ENCODE measurements at regions of chr6 and their contacts with region 1.

Region 1: DNA sequence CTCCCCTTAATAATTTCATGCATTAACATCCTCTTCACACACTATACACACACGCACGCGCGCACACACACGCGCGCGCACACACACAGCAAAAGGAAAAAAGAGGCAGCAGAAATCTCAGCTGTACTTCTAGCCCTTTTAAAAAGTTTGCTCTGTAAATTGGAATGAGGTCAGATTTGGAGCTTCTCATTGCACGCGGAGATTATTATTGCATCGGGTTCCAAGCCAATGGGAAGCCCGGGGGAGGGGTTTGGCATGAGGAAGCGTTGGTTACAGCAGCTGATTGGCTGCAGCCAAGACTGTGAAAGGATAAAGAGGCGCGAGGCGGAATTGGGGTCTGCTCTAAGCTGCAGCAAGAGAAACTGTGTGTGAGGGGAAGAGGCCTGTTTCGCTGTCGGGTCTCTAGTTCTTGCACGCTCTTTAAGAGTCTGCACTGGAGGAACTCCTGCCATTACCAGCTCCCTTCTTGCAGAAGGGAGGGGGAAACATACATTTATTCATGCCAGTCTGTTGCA is at the start of gene SOX4:
- DNase-seq: peak; percentile 99
- H3K4me3 Mint-ChIP-seq: no peak within 1 kb of the TSS
- H3K27ac Mint-ChIP-seq: no peak within 1 kb of the TSS
- H3K4me1 Mint-ChIP-seq: peaks cover 2% of the 10 kb centered on the region
- H3K27me3 Mint-ChIP-seq: no peaks in the 10 kb centered on the region
- CTCF ChIP-seq: no peak
- total RNA-seq, gene SOX4: 109 and 120 TPM in 2 replicates

Region 2: DNA sequence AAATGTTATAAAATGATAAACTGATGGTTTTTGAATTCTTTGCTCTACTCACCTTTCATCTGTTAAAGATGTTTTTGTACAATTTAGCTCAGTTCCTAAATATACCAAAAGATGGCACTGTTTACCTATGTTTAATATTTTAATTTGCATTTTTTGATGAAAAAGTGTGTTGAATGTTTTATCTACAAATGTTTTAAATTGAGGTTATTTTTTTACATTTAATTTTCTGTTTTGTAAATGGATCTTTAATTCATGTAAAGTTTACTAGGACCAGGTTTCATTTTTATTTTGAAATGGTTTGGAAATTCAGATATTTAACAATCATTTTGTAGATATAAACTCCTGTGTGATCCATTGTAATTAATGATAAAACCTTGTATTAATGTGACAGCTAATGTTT is 1029.2 kb before region 1 on chr6:
- CTCF ChIA-PET with region 1: interaction called, 33 read pairs
- intact Hi-C with region 1: loop called (anchors 1 kb)
- DNase-seq: no peak
- H3K4me3 Mint-ChIP-seq: no peak overlapping the region
- H3K27ac Mint-ChIP-seq: no peak overlapping the region
- H3K4me1 Mint-ChIP-seq: peaks cover 9% of the 10 kb centered on the region
- H3K27me3 Mint-ChIP-seq: no peaks in the 10 kb centered on the region
- CTCF ChIP-seq: peak; percentile 69

Region 3: GRCh38 chr6:21022343-21023107 is 570.9 kb before region 1 on chr6:
- CTCF ChIA-PET with region 1: interaction called, 22 read pairs
- intact Hi-C with region 1: loop called (anchors 1 kb)
- DNase-seq: peak; percentile 91
- H3K4me3 Mint-ChIP-seq: peak overlapping the region; percentile 53
- H3K27ac Mint-ChIP-seq: peak overlapping the region; percentile 97
- H3K4me1 Mint-ChIP-seq: peaks cover 65% of the 10 kb centered on the region
- H3K27me3 Mint-ChIP-seq: no peaks in the 10 kb centered on the region
- CTCF ChIP-seq: no peak

Region 4: GRCh38 chr6:21103688-21104087 is 489.8 kb before region 1 on chr6:
- CTCF ChIA-PET with region 1: no interaction called
- intact Hi-C with region 1: no loop called
- DNase-seq: no peak
- H3K4me3 Mint-ChIP-seq: no peak overlapping the region
- H3K27ac Mint-ChIP-seq: no peak overlapping the region
- H3K4me1 Mint-ChIP-seq: peaks cover 59% of the 10 kb centered on the region
- H3K27me3 Mint-ChIP-seq: no peaks in the 10 kb centered on the region
- CTCF ChIP-seq: no peak

Region 5: GRCh38 chr6:21664314-21665109 is 71.0 kb after region 1 on chr6:
- CTCF ChIA-PET with region 1: interaction called, 3 read pairs
- intact Hi-C with region 1: loop called (anchors 5 kb)
- DNase-seq: peak; percentile 54
- H3K4me3 Mint-ChIP-seq: peak overlapping the region; percentile 95
- H3K27ac Mint-ChIP-seq: peak overlapping the region; percentile 50
- H3K4me1 Mint-ChIP-seq: peaks cover 16% of the 10 kb centered on the region
- H3K27me3 Mint-ChIP-seq: peaks cover 55% of the 10 kb centered on the region
- CTCF ChIP-seq: no peak

Region 6: GRCh38 chr6:21922086-21922485 is 328.6 kb after region 1 on chr6:
- CTCF ChIA-PET with region 1: no interaction called
- intact Hi-C with region 1: loop called (anchors 2 kb)
- DNase-seq: no peak
- H3K4me3 Mint-ChIP-seq: no peak overlapping the region
- H3K27ac Mint-ChIP-seq: no peak overlapping the region
- H3K4me1 Mint-ChIP-seq: peaks cover 52% of the 10 kb centered on the region
- H3K27me3 Mint-ChIP-seq: no peaks in the 10 kb centered on the region
- CTCF ChIP-seq: no peak

Region 7: GRCh38 chr6:21971541-21971940 is 378.1 kb after region 1 on chr6:
- CTCF ChIA-PET with region 1: no interaction called
- intact Hi-C with region 1: no loop called
- DNase-seq: no peak
- H3K4me3 Mint-ChIP-seq: no peak overlapping the region
- H3K27ac Mint-ChIP-seq: no peak overlapping the region
- H3K4me1 Mint-ChIP-seq: peaks cover 6% of the 10 kb centered on the region
- H3K27me3 Mint-ChIP-seq: no peaks in the 10 kb centered on the region
- CTCF ChIP-seq: no peak

Region 8: GRCh38 chr6:22471132-22471690 is 877.7 kb after region 1 on chr6:
- CTCF ChIA-PET with region 1: interaction called, 3 read pairs
- intact Hi-C with region 1: loop called (anchors 2 kb)
- DNase-seq: peak; percentile 70
- H3K4me3 Mint-ChIP-seq: no peak overlapping the region
- H3K27ac Mint-ChIP-seq: no peak overlapping the region
- H3K4me1 Mint-ChIP-seq: peaks cover 38% of the 10 kb centered on the region
- H3K27me3 Mint-ChIP-seq: no peaks in the 10 kb centered on the region
- CTCF ChIP-seq: no peak

Region 9: GRCh38 chr6:23446394-23447046 is 1853.1 kb after region 1 on chr6:
- CTCF ChIA-PET with region 1: no interaction called
- intact Hi-C with region 1: loop called (anchors 10 kb)
- DNase-seq: peak; percentile 23
- H3K4me3 Mint-ChIP-seq: no peak overlapping the region
- H3K27ac Mint-ChIP-seq: no peak overlapping the region
- H3K4me1 Mint-ChIP-seq: no peaks in the 10 kb centered on the region
- H3K27me3 Mint-ChIP-seq: no peaks in the 10 kb centered on the region
- CTCF ChIP-seq: no peak

Measured in Calu3 (cell line).